Gastrocnemius medialis (tissue), 4 donors: ENCODE measurements at regions of chr19 and their contacts with region 1.

Region 1: DNA sequence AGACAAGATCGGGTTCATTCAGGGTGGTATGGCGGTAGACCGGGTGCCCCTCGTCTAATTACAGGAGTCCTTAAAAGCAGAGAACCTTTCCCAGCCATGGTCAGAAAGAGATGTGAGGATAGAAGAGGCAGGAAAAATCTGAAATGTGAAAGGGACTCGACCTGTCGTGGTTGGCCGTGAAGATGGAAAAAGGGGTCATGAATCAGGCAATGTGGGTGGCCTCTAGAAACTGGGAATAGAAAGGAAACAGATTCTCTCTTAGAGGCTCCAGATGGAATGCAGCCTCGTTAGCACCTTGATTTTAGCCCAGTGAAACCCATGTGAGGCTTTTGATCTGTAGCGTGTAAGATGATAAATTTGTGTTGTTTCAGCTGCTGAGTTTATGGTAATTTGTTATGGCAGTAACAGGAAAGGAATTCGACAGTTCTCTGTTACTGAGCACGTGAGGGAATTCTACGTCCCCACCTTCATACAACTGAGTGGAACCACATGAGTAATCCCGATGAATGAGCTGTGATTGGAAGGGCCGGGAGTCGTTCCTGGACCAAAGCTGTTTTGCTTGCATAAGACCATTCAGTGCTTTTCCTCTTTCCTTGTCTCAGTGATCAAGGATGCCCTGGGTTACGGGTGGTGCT is 11.0 kb upstream of the CA11 start:
- DNase-seq: no peak
- ATAC-seq: no peak
- H3K4me3 ChIP-seq: no peak overlapping the region
- H3K27ac ChIP-seq: no peak overlapping the region
- H3K4me1 ChIP-seq: no peaks in the 10 kb centered on the region
- H3K27me3 ChIP-seq: no peaks in the 10 kb centered on the region
- CTCF ChIP-seq: no peak
- POLR2A ChIP-seq: no peak

Region 2: DNA sequence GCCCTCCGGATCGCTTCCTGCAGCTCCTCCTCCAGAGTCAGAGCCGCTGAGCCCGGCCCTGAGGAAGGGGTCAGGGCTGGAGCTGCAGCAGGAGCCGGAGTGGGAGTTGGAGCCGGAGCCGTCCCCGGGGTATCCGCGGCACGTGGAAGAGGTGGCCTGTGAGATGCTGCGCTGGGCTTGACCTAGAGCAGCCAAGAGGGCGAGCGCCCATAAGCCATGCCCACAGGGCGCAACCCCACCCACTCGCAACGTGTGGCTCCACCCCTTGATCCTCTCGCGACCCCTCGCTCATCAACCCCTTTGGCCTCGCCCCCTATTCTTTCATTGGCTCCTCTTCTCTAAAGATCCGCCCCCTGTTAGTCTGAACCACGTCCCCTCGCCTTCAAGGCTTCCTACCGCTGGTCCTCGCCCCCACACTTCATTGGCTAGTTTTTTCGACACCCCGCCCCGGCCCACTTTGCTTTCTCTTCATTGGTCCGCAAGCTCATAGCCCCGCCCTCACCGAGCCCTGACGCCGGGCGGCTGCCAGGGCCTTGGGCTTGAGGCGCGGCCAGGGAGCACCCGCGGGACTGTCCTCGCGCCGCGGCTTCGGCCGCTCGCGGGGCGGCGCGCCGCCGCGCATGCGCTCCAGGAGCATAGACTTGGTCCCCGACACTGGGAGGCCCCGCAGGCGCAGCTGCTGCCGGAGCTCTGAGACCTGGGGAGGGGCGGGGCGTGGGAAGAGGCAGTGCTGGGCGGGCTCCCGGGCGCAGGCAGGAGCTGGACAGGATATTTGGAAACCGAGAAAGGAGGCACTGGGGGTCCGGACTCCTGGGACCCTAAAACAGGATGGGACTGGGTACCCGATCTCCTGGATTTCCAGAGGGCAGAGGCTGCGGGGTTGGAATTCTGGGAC is 57.2 kb after region 1 on chr19:
- in situ Hi-C with region 1: loop called in 1 of 4 experiments (anchors 10 kb)
- intact Hi-C with region 1: no loop called
- DNase-seq: peak; percentile 98 to 99
- ATAC-seq: peak; percentile 88 to 94
- H3K4me3 ChIP-seq: peak overlapping the region; percentile 47 to 65 (median 60)
- H3K27ac ChIP-seq: peak overlapping the region; percentile 88 to 98 (median 94)
- H3K4me1 ChIP-seq: peaks cover 39 to 43% of the 10 kb centered on the region in 2 donors
- H3K27me3 ChIP-seq: no peaks in the 10 kb centered on the region
- CTCF ChIP-seq: no peak
- POLR2A ChIP-seq: peak; percentile 60 to 73